Lower leg skin (tissue), 4 donors: ENCODE measurements at regions of chr16 and their contacts with region 1.

Region 1: DNA sequence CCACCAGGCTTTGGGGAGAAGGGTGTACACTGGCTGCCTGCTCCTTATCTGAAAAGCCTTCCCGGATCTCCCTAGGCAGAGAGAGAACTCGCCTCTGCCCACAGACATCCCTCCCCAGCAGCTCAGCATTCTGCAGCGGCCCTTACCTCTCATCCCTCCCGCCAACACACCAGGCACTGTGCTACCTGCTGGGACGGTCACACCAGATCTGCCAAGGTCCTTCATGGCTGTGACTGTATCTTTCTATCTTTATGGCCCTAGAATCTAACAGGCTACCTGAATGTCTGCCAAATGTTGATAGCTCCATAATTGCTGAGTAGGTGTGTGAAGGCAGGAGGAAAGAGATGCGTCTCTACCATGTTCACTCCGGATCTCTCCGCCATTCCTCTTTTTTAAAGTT is 7.9 kb downstream of the TSNAXIP1 start:
- DNase-seq: no peak
- H3K4me3 ChIP-seq: no peak overlapping the region
- CTCF ChIP-seq: no peak
- POLR2A ChIP-seq: no peak

Region 2: DNA sequence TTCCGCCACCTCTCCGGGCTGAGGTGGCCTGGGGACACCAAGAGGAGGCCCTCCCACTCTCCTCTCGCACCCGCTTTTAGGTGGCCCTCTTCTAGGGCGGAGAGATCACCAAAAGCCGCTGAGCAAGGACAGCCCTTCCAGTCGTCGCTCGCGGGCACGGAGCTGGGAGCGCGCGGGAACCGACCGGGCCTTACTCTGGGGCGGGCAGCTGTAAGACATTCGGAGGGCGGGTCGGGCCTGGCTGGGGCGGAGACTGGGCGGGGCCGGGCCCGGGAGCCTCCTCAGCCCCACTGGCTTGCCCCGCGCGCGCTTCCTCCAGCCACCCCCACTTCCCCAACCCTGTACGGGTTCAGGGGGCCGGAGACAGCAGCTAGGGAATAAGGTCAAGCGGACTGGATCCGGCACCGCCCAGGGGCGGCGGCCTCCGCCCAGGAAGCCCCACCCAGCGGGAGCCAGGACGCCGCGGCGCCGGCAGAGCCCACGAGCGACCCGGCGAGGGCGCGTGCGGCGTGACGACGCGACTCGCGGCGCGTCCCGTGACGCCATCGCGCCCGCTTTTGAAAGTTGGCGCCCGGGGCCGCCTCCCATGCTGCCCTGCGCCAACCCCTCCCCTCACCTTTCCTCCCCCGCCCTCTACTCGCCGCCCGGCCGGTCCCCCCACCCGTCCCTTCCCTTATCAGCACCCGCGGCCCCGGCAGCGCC is 252.6 kb before region 1 on chr16:
- intact Hi-C with region 1: no loop called
- DNase-seq: peak; percentile 96 to 99
- H3K4me3 ChIP-seq: peak overlapping the region; percentile 39
- CTCF ChIP-seq: no peak
- POLR2A ChIP-seq: no peak

Region 3: DNA sequence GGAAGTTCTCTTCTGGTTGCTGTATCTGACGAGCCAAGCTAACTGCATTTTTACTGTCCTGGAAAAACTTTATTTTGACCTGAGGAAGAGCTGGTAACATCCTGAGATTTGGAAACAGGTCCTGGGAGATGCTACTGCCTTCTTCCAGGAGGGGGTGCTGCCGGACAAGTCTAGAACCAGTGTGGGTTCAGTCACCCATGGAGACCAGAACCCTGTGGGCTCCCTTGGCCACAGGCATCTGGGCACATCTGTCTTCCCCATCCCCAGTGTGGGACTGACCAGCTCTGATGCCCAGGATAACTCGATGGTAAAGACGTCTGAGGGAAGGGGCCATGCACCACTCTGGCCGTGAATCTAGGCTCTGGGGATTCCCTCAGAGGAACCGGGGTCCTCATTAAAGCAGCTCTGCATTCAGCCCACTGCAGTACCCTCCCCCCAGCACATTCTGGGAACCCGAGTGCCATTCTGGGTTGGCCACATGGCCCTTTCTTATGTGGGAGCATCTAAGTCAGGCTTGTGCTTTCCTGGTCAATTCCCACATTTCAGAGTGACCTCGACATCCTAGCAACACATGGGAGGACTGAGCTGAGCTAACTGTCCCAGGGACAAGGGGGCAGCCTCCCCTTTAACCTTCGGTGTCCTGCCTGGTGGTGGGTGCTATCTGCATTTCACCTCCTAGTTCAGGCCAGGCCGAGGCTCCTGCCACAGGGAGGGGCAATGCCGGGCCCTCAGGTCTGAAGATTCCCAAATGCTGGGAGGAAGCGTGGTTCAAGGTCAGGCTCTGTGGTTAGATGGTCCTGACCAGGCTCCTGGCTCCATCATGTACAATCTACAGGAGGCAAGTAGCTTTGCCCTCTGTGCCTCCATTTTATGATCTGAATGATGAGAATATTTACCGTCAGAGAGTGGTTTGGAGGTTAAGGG is 141.6 kb before region 1 on chr16:
- intact Hi-C with region 1: loop called (anchors 5 kb)
- DNase-seq: peak; percentile 59 to 92
- H3K4me3 ChIP-seq: no peak overlapping the region
- CTCF ChIP-seq: no peak
- POLR2A ChIP-seq: no peak

Region 4: GRCh38 chr16:67993189-67994039 is 178.8 kb after region 1 on chr16:
- intact Hi-C with region 1: no loop called
- DNase-seq: peak; percentile 54 to 94
- H3K4me3 ChIP-seq: no peak overlapping the region
- CTCF ChIP-seq: peak in 2 of 3 donors; percentile 94 to 99
- POLR2A ChIP-seq: no peak